PC-3 (cell line): ENCODE measurements at regions of chr3 and their contacts with region 1.

Region 1: DNA sequence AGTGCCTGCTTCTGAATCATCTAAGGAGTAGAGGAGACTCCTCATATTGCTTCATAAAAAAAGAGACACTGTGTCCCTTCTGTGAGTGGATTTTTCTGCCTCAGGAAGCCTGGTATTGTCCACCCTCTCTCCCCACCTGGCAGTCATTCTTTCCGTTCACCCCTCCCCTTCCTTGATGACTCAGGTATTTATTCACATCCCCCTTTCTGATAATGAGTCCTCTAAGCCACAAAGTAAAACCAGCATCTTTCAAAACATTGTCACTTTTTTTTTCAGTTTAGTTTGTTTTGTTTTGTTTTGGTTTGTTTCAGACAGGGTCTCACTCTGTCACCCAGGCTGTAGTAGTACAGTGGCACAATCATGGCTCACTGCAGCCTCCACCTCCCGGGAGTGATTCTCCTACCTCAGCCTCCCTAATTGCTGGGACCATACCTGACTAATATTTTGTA is 65.2 kb upstream of the UBE2E1 start:
- DNase-seq: peak; percentile 97
- ATAC-seq: peak; percentile 70
- H3K4me3 ChIP-seq: peak overlapping the region; percentile 64
- H3K27ac ChIP-seq: peak overlapping the region; percentile 96
- H3K4me1 ChIP-seq: peaks cover 59% of the 10 kb centered on the region
- H3K27me3 ChIP-seq: no peaks in the 10 kb centered on the region
- CTCF ChIP-seq: no peak

Region 2: GRCh38 chr3:23304424-23304823 is 436.1 kb before region 1 on chr3:
- CTCF ChIA-PET with region 1: no interaction called
- POLR2A ChIA-PET with region 1: interaction called, 11 read pairs
- intact Hi-C with region 1: no loop called
- DNase-seq: no peak
- ATAC-seq: no peak
- H3K4me3 ChIP-seq: no peak overlapping the region
- H3K27ac ChIP-seq: no peak overlapping the region
- H3K4me1 ChIP-seq: no peaks in the 10 kb centered on the region
- H3K27me3 ChIP-seq: no peaks in the 10 kb centered on the region
- CTCF ChIP-seq: no peak

Region 3: GRCh38 chr3:23442598-23443383 is 297.8 kb before region 1 on chr3:
- CTCF ChIA-PET with region 1: no interaction called
- POLR2A ChIA-PET with region 1: no interaction called
- intact Hi-C with region 1: no loop called
- DNase-seq: peak; percentile 25
- ATAC-seq: no peak
- H3K4me3 ChIP-seq: no peak overlapping the region
- H3K27ac ChIP-seq: no peak overlapping the region
- H3K4me1 ChIP-seq: no peaks in the 10 kb centered on the region
- H3K27me3 ChIP-seq: no peaks in the 10 kb centered on the region
- CTCF ChIP-seq: no peak

Region 4: DNA sequence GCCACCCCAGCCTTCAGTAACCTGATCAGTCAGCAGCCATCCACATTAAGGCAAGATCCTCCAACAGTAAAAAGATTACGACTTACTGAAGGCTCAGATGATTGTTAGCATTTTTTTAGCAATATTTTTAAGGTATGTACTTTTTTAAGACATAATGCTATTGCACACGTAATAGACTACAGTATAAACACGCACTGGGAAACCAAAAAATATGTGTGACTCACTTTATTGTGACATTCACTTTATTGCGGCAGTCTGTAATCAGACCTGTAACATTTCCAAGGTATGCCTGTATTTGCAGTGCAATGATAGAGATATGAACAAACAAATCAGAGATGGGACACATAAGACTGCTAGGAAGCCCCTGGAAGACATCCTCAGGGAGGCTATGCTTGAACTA is 160.2 kb before region 1 on chr3:
- CTCF ChIA-PET with region 1: no interaction called
- POLR2A ChIA-PET with region 1: no interaction called
- intact Hi-C with region 1: loop called (anchors 1 kb)
- DNase-seq: peak; percentile 97
- ATAC-seq: peak; percentile 64
- H3K4me3 ChIP-seq: peak overlapping the region; percentile 16; the same call in 1 of the 2 replicates
- H3K27ac ChIP-seq: peak overlapping the region; percentile 69
- H3K4me1 ChIP-seq: peaks cover 38% of the 10 kb centered on the region
- H3K27me3 ChIP-seq: no peaks in the 10 kb centered on the region
- CTCF ChIP-seq: no peak

Region 5: DNA sequence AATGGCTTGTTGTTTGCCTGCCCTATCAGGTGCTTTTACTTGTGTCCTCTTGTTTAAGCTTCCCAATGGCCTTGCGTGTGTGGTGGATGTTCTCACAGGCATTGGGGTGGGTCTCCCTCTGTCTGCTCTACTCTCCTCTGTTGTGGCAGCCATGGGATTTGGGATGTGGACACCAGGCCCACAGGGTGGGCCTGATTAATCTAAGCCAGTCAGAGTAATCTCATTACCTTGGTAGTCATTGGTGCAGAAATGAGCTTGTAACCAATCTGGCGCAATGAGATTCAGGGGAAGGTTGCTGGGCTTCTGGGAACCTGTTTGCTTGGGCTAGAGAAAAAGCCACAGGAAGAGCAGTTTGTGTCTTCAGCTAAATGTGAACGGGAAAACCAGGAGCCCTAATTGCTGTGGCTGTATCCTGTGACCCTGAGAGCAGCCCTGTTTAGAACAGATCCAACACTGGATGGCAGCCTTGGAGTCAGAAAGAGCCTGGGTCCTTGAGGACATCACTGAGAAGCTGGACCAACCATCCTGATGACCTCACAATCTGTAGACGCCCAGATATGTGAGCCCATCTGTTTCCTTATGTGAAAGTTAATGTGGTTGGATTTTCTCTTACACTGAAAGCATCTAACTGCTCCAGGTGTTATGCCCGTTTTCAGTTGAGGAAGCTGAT is 92.1 kb before region 1 on chr3:
- CTCF ChIA-PET with region 1: no interaction called
- POLR2A ChIA-PET with region 1: no interaction called
- intact Hi-C with region 1: loop called (anchors 1 kb)
- DNase-seq: peak; percentile 32
- ATAC-seq: no peak
- H3K4me3 ChIP-seq: no peak overlapping the region
- H3K27ac ChIP-seq: no peak overlapping the region
- H3K4me1 ChIP-seq: peaks cover 42% of the 10 kb centered on the region
- H3K27me3 ChIP-seq: no peaks in the 10 kb centered on the region
- CTCF ChIP-seq: peak; percentile 44; the same call in 1 of the 2 replicates

Region 6: GRCh38 chr3:23659274-23659673 is 81.3 kb before region 1 on chr3:
- CTCF ChIA-PET with region 1: no interaction called
- POLR2A ChIA-PET with region 1: no interaction called
- intact Hi-C with region 1: no loop called
- DNase-seq: no peak
- ATAC-seq: no peak
- H3K4me3 ChIP-seq: no peak overlapping the region
- H3K27ac ChIP-seq: no peak overlapping the region
- H3K4me1 ChIP-seq: peaks cover 12% of the 10 kb centered on the region
- H3K27me3 ChIP-seq: no peaks in the 10 kb centered on the region
- CTCF ChIP-seq: no peak

Region 7: DNA sequence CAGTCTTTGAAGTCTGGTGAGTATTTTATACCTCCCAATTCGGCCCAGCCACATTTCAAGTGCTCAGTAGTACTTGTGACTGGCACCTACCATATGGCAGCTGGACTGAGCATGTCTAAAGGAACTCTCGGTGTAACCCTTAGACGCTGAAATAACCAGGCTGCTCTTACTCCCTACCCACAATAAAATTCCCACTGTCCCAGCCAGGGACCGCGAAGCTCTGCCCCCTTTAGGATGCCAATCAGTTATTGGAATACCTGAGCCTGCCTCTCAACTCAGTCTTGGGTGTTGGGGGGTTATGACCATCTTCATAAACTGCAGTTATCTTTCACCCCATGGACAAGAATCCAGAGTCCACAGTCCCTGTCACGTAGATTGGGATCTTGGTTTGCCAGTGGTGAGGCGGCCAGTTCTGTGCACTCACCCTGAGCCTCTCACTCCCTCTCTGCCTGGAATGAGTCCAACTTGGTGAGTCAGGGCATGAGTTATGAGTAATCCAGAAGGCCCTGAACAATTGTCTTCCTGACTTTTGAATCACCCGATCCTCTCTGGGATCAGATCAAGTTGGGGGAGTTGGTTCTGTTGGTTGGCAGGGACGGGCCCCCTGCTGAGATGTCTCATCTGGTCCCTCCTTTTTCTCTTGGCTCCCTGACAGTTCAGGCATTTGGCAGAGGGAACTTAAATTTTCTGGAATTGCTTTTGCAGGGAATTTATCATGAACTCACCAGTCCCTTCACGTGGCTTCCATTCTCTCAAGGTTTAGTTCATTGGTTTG is 54.9 kb before region 1 on chr3:
- CTCF ChIA-PET with region 1: no interaction called
- POLR2A ChIA-PET with region 1: no interaction called
- intact Hi-C with region 1: loop called (anchors 2 kb)
- DNase-seq: peak; percentile 100
- ATAC-seq: peak; percentile 93
- H3K4me3 ChIP-seq: no peak overlapping the region
- H3K27ac ChIP-seq: peak overlapping the region; percentile 85
- H3K4me1 ChIP-seq: peaks cover 26% of the 10 kb centered on the region
- H3K27me3 ChIP-seq: no peaks in the 10 kb centered on the region
- CTCF ChIP-seq: no peak

Region 8: GRCh38 chr3:23805633-23806533 is 65.3 kb after region 1 on chr3 and contains the start of gene UBE2E1:
- CTCF ChIA-PET with region 1: no interaction called
- POLR2A ChIA-PET with region 1: interaction called, 3 read pairs
- intact Hi-C with region 1: loop called (anchors 1 kb)
- DNase-seq: peak; percentile 61
- ATAC-seq: peak; percentile 35
- H3K4me3 ChIP-seq: peak within 1 kb of the TSS; percentile 90
- H3K27ac ChIP-seq: peak within 1 kb of the TSS; percentile 29
- H3K4me1 ChIP-seq: peaks cover 45% of the 10 kb centered on the region
- H3K27me3 ChIP-seq: no peaks in the 10 kb centered on the region
- CTCF ChIP-seq: no peak
- total RNA-seq, gene UBE2E1: 90.1 and 117 TPM in 2 replicates